Mammary epithelial cell (primary cell): ENCODE measurements at regions of chr5 and their contacts with region 1.

Region 1: DNA sequence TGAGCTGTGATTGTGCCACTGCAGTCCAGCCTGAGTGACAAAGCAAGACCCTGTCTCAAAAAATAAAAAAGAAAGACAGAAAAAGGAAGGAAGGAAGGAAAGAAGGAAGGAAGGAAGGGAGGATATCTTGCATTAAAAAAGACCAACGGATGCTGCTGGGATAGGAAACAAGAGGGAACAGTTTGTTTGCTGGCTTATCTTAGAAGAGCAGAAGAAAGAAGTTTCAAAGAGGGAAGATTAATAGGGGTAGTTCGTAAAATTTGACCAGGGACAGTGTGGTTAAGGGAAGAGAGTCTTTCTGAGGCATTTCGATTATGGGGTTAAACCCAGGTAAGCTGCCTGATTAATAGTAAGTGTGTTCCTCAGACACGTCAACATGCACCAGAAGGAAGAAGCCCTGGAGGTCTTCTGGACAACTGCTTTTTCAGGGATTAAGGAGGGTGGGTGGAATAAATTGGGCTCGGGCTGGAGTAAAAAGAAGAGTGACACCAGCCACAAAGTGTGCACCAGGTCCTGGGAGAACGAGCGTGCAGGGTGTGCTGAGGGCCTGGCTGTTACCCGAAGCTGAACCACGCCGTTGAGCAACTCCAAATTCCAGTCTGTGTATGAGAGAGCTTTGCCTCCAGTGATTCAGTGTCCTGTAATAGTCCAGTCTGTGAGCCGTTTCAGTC is 24.8 kb downstream of the FYB1 start:
- DNase-seq: peak; percentile 96
- H3K4me3 ChIP-seq: no peak overlapping the region
- H3K27ac ChIP-seq: peak overlapping the region; percentile 96
- H3K4me1 ChIP-seq: peaks cover 52% of the 10 kb centered on the region
- H3K27me3 ChIP-seq: no peaks in the 10 kb centered on the region
- CTCF ChIP-seq: no peak

Region 2: DNA sequence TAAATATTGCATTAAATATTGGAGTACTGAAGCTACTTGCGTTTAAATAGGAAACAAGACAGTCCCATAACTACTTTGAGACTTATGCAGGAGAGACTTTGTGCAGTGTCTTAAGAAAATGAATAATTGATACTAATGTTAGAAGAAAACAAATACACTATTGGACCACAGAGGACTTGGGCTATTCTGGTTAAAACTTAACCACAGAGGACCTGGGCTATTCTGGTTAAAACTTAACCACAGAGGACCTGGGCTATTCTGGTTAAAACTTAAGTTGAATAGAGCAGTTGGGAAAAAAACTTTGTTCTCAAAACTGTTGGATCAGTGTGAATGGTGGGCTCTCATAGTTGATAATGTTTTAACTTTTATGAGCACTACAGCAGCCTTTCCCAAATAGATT is 1673.8 kb before region 1 on chr5:
- CTCF ChIA-PET with region 1: interaction called, 14 read pairs
- dilution Hi-C with region 1: no loop called
- in situ Hi-C with region 1: no loop called
- intact Hi-C with region 1: no loop called
- DNase-seq: no peak
- H3K4me3 ChIP-seq: no peak overlapping the region
- H3K27ac ChIP-seq: no peak overlapping the region
- H3K4me1 ChIP-seq: no peaks in the 10 kb centered on the region
- H3K27me3 ChIP-seq: no peaks in the 10 kb centered on the region
- CTCF ChIP-seq: no peak

Region 3: DNA sequence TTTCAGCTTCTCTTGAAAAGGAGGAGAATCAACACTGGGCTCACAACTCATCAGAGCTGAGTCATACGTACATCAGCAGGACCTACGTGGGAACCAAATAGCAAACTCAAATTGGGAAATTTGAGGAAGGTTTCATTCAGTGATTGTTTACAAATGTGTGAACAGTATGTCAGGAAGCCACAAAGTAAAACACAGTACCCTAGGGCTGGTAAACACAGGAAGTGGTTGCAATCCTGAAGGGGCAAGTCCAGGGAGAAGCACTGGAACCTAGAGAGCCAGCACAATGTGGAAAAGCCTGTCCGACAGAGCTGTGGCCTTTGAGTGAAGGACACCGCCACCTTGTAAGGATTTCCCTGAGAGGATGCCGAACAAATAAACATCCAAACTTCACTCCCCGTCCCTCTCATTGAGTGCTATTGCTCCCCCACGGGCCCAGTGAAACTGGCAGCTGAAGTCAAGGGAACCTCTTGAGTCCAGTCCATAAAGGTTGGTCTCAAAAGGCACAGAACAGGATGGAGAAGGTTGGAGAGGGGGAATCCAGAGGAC is 93.7 kb before region 1 on chr5:
- CTCF ChIA-PET with region 1: no interaction called
- dilution Hi-C with region 1: no loop called
- in situ Hi-C with region 1: no loop called
- intact Hi-C with region 1: loop called (anchors 5 kb)
- DNase-seq: peak; percentile 99
- H3K4me3 ChIP-seq: no peak overlapping the region
- H3K27ac ChIP-seq: peak overlapping the region; percentile 94
- H3K4me1 ChIP-seq: peaks cover 47% of the 10 kb centered on the region
- H3K27me3 ChIP-seq: no peaks in the 10 kb centered on the region
- CTCF ChIP-seq: no peak

Region 4: GRCh38 chr5:39158127-39158593 is 36.4 kb before region 1 on chr5:
- CTCF ChIA-PET with region 1: no interaction called
- dilution Hi-C with region 1: no loop called
- in situ Hi-C with region 1: no loop called
- intact Hi-C with region 1: loop called (anchors 5 kb)
- DNase-seq: peak; percentile 80
- H3K4me3 ChIP-seq: no peak overlapping the region
- H3K27ac ChIP-seq: peak overlapping the region; percentile 48
- H3K4me1 ChIP-seq: peaks cover 16% of the 10 kb centered on the region
- H3K27me3 ChIP-seq: no peaks in the 10 kb centered on the region
- CTCF ChIP-seq: no peak